HCT116 (cell line): ENCODE measurements at regions of chr14 and their contacts with region 1.

Region 1: GRCh38 chr14:77457522-77458290 is at the starts of genes AHSA1 and VIPAS39:
- DNase-seq: peak; percentile 99
- ATAC-seq: peak; percentile 93
- H3K4me3 ChIP-seq: peak within 1 kb of the TSS; percentile 87 to 89
- H3K27ac ChIP-seq: peak within 1 kb of the TSS; percentile 81
- H3K4me1 ChIP-seq: peaks cover 6 to 15% of the 10 kb centered on the region in 2 experiments
- H3K27me3 ChIP-seq: no peaks in the 10 kb centered on the region
- CTCF ChIP-seq: 0 out of 6 replicates have a peak, but pooled peaks of 1 of the 3 experiments have one; percentile 2
- POLR2A ChIP-seq: peak; percentile 79
- RAD21 ChIP-seq: no peak
- total RNA-seq, gene AHSA1: 222 TPM
- total RNA-seq, gene VIPAS39: 16.8 TPM

Region 2: DNA sequence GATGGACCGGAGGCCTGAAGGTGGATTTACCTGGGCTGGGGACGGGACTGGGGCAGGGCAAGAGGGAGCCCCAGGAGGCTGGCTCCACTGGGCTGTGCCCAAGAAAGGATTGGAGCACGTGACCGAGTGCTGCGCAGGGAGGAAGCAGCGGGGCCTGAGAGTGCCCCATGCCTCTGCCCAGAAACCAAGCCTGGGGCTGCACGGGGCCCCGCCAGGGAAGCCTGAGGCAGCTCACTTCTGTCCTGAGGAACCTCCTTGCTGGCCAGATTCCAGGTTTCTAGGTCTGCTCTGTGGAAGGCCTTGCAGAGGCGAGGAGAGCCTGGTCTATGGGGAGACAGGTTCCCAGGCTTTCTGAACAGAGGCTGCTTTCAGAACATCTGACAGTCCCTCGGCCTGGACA is 197.1 kb before region 1 on chr14:
- CTCF ChIA-PET with region 1: no interaction called
- POLR2A ChIA-PET with region 1: no interaction called
- RAD21 ChIA-PET with region 1: no interaction called
- intact Hi-C with region 1: no loop called
- DNase-seq: no peak
- ATAC-seq: 0 out of 2 replicates have a peak, but pooled peaks have one; percentile 24
- H3K4me3 ChIP-seq: no peak overlapping the region
- H3K27ac ChIP-seq: no peak overlapping the region
- H3K4me1 ChIP-seq: no peaks in the 10 kb centered on the region
- H3K27me3 ChIP-seq: no peaks in the 10 kb centered on the region
- CTCF ChIP-seq: no peak
- POLR2A ChIP-seq: no peak
- RAD21 ChIP-seq: no peak

Region 3: DNA sequence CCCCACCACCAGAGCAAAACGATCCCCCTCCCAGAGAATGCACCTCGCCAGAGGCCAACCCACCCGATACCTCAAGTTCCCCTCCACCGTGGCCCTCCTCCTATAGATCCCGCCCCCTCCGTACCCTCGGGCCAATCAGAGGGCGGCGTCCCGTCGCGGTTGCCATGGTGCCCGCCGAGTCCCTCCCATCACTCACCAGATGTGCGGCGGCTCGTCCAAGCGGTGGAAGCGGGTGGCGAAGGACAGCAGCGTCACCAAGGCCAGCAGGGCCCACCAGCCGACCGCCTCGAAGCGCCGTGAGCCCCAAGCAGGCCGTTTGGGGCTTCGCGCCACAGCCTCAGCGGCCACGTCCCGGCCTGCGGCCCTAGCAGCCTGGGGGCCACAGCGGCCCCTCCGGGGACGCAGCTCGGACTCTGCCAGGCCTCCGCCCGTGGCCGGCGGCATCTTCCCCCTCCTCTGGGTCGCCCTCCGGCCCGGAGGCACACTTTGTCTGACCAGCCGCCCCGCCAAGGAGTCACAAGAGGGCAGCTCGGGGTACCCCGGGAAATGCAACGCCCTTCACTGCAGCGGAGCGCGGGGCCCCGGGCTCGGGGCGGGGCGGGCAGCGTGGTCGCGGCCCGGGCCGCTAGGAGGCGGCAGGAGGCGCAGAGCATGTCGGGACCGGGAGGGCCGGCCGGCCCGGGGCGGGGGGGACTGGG is 137.3 kb before region 1 on chr14 and contains the start of gene POMT2:
- CTCF ChIA-PET with region 1: interaction called, 4 read pairs
- POLR2A ChIA-PET with region 1: interaction called, 3 read pairs
- RAD21 ChIA-PET with region 1: no interaction called
- intact Hi-C with region 1: loop called (anchors 5 kb)
- DNase-seq: peak; percentile 78
- ATAC-seq: peak; percentile 71
- H3K4me3 ChIP-seq: peak within 1 kb of the TSS; percentile 72
- H3K27ac ChIP-seq: peak within 1 kb of the TSS; percentile 94
- H3K4me1 ChIP-seq: peaks cover 8 to 25% of the 10 kb centered on the region in 2 experiments; a peak in 3 of 4 replicates
- H3K27me3 ChIP-seq: no peaks in the 10 kb centered on the region
- CTCF ChIP-seq: peak in 2 of 3 experiments; percentile 27 to 35; a peak in 4 of 6 replicates
- POLR2A ChIP-seq: peak; percentile 50
- RAD21 ChIP-seq: no peak
- total RNA-seq, gene POMT2: 30.2 TPM

Region 4: GRCh38 chr14:77554207-77554606 is 96.5 kb after region 1 on chr14:
- CTCF ChIA-PET with region 1: interaction called, 13 read pairs
- POLR2A ChIA-PET with region 1: no interaction called
- RAD21 ChIA-PET with region 1: no interaction called
- intact Hi-C with region 1: loop called (anchors 2 kb)
- DNase-seq: no peak
- ATAC-seq: no peak
- H3K4me3 ChIP-seq: no peak overlapping the region
- H3K27ac ChIP-seq: no peak overlapping the region
- H3K4me1 ChIP-seq: no peaks in the 10 kb centered on the region
- H3K27me3 ChIP-seq: no peaks in the 10 kb centered on the region
- CTCF ChIP-seq: no peak
- POLR2A ChIP-seq: no peak
- RAD21 ChIP-seq: no peak

Region 5: GRCh38 chr14:77674931-77675330 is 217.2 kb after region 1 on chr14:
- CTCF ChIA-PET with region 1: no interaction called
- POLR2A ChIA-PET with region 1: no interaction called
- RAD21 ChIA-PET with region 1: no interaction called
- intact Hi-C with region 1: no loop called
- DNase-seq: no peak
- ATAC-seq: no peak
- H3K4me3 ChIP-seq: no peak overlapping the region
- H3K27ac ChIP-seq: no peak overlapping the region
- H3K4me1 ChIP-seq: no peaks in the 10 kb centered on the region
- H3K27me3 ChIP-seq: no peaks in the 10 kb centered on the region
- CTCF ChIP-seq: no peak
- POLR2A ChIP-seq: no peak
- RAD21 ChIP-seq: no peak

Region 6: DNA sequence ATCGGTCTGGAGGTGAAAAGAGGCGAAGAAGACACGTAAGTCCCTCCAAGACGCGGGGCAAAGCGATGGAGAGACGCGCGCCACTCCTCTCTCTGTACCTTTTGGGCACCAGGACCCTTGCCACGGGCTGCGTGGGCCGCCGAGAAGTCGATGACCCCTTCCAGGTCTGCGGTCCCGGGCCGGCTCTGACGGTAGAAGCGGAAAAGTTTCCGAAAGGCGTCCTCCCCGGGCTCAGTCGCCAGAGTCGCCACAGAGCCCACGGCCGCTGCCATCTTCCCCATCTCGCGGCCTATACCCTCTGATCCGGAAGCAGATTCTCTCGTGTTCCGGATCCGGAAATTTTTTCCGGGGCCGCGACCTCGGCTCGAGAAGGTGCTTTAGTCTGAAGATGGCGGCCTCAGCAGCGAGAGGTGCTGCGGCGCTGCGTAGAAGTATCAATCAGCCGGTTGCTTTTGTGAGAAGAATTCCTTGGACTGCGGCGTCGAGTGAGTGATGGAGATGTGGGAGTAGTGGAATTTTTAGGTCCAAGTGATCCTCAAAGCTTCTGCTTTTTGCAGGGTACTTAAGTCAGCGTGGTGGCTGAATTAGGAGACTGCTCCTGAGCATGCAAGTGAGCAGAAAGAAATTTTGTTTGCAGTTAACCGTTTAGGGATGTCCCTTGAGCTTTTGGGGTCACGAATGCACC is 250.2 kb after region 1 on chr14 and contains the starts of genes ALKBH1 and SLIRP:
- CTCF ChIA-PET with region 1: interaction called, 3 read pairs
- POLR2A ChIA-PET with region 1: no interaction called
- RAD21 ChIA-PET with region 1: no interaction called
- intact Hi-C with region 1: loop called (anchors 2 kb)
- DNase-seq: peak; percentile 59
- ATAC-seq: peak; percentile 97
- H3K4me3 ChIP-seq: peak within 1 kb of the TSS; percentile 83 to 89
- H3K27ac ChIP-seq: peak within 1 kb of the TSS; percentile 50
- H3K4me1 ChIP-seq: peaks cover 11 to 23% of the 10 kb centered on the region in 2 experiments; a peak in 3 of 4 replicates
- H3K27me3 ChIP-seq: no peaks in the 10 kb centered on the region
- CTCF ChIP-seq: no peak
- POLR2A ChIP-seq: peak; percentile 94
- RAD21 ChIP-seq: no peak
- total RNA-seq, gene ALKBH1: 14.4 TPM
- total RNA-seq, gene SLIRP: 242 TPM